GM12878 (cell line): ENCODE measurements at regions of chr12 and their contacts with region 1.

Region 1: DNA sequence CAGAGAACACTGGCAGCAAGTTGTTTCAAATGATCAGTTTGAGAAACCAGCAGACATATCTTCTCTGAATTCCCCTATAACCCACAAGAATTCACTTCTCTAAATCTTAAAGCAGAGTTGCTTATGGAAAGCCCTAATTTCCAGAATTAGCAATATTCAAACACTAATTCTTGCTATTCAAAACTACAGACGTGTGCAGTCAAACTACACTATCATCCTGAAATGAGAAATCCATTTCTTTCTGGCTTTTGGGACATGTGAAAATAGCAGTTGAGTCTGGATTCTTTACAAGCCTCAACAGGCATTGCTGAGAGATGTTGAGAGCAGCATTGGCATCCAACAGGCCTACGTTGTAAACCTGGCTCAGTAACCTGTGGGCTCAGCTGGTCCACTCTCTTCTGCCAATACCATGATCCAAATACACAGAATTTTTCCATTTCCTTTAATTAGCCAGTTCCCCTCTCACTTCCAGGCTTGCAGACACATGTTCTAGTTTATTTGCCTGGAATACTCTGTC is 74.6 kb upstream of the TMTC1 start:
- DNase-seq: peak; percentile 4
- ATAC-seq: peak; percentile 88
- H3K4me3 ChIP-seq: no peak overlapping the region
- H3K27ac ChIP-seq: no peak overlapping the region
- H3K4me1 ChIP-seq: no peaks in the 10 kb centered on the region
- H3K27me3 ChIP-seq: no peaks in the 10 kb centered on the region
- CTCF ChIP-seq: no peak
- EP300 ChIP-seq: no peak
- POLR2A ChIP-seq: no peak
- RAD21 ChIP-seq: no peak

Region 2: DNA sequence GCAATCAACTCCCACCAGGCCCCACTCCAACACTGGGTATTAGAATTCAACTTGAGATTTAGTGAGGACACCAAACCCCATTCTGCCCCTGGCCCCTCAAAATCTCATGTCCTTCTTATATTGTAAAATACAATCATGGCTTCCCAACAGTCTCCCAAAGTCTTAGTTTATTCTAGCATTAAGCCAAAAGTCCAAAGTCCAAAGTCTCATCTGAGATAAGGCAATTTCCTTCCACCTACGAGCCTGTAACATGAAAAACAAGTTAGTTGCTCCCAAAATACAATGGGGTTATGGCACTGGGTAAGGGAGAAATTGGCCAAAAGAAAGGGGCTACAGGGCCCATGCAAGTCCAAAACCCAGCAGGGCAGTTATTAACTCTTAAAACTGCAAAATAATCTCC is 27.9 kb before region 1 on chr12:
- CTCF ChIA-PET with region 1: no interaction called
- POLR2A ChIA-PET with region 1: no interaction called
- RAD21 ChIA-PET with region 1: no interaction called
- SMC1A ChIA-PET with region 1: no interaction called
- in situ Hi-C with region 1: no loop called
- intact Hi-C with region 1: no loop called
- DNase-seq: no peak
- ATAC-seq: no peak
- H3K4me3 ChIP-seq: no peak overlapping the region
- H3K27ac ChIP-seq: no peak overlapping the region
- H3K4me1 ChIP-seq: no peaks in the 10 kb centered on the region
- H3K27me3 ChIP-seq: no peaks in the 10 kb centered on the region
- CTCF ChIP-seq: no peak
- EP300 ChIP-seq: no peak
- POLR2A ChIP-seq: no peak
- RAD21 ChIP-seq: no peak

Region 3: DNA sequence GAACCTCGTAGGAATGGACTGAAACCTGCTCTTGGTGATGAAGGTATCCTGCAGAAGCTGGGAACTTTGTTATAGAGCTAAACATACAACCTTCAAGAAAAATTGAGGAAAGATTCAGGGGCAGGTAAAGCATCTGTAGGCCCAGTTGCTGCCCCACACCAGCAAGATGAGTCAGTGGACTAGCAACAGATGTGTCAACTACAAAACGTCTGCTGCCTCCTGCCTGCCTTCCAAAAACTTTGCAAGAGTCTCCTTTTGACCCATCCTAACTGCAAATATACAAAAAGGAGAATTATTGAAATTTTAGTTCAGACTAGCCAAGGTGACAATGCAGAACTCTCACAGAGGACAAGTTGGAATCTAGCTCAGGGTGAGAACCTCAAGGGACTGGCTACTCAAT is 13.7 kb before region 1 on chr12:
- CTCF ChIA-PET with region 1: no interaction called
- POLR2A ChIA-PET with region 1: interaction called, 4 read pairs
- RAD21 ChIA-PET with region 1: interaction called, 10 read pairs
- SMC1A ChIA-PET with region 1: interaction called, 7 read pairs
- in situ Hi-C with region 1: no loop called
- intact Hi-C with region 1: no loop called
- DNase-seq: no peak
- ATAC-seq: peak; percentile 14; the same call in 2 of the 3 replicates
- H3K4me3 ChIP-seq: no peak overlapping the region
- H3K27ac ChIP-seq: no peak overlapping the region
- H3K4me1 ChIP-seq: no peaks in the 10 kb centered on the region
- H3K27me3 ChIP-seq: no peaks in the 10 kb centered on the region
- CTCF ChIP-seq: peak in 1 of 3 experiments; percentile 6; a peak in 1 of 6 replicates
- EP300 ChIP-seq: no peak
- POLR2A ChIP-seq: no peak
- RAD21 ChIP-seq: no peak